T-cell (primary cell): ENCODE measurements at regions of chr9 and their contacts with region 1.

Region 1: GRCh38 chr9:109861918-109862317 is 81.9 kb downstream of the PALM2AKAP2 start:
- DNase-seq: no peak
- ATAC-seq: no peak
- H3K4me3 ChIP-seq: no peak overlapping the region
- H3K4me3 Mint-ChIP-seq: no peak overlapping the region
- H3K27ac ChIP-seq: no peak overlapping the region
- H3K27ac Mint-ChIP-seq: no peak overlapping the region
- H3K4me1 ChIP-seq: no peaks in the 10 kb centered on the region
- H3K4me1 Mint-ChIP-seq: no peaks in the 10 kb centered on the region
- H3K27me3 ChIP-seq: peaks cover 3 to 4% of the 10 kb centered on the region in 2 experiments
- H3K27me3 Mint-ChIP-seq: peaks cover 7 to 10% of the 10 kb centered on the region in 2 donors

Region 2: DNA sequence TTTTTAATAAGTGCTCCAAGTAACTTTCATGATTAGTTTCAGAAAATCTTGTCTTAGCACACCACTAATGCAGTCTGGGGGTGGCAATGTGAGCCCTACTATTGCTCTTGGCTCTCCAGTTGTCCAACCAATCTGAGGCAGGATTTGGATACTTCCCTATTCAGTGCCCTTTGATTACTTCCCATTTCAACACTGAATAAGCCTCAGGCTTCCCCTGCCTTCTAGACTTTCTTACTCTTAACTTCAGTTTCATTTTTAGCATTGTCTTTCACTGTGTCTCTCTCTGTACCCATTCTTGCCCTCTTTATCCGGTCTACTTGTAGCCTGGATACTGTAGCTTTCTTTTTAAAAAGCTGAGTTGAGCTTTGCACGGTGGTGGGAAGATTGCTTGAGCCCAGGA is 160.0 kb after region 1 on chr9:
- CTCF ChIA-PET with region 1: interaction called in 1 of 2 experiments, 13 read pairs
- POLR2A ChIA-PET with region 1: no interaction called
- DNase-seq: peak in 1 of 35 experiments; percentile 3
- ATAC-seq: peak; percentile 31 to 62 (median 48)
- H3K4me3 ChIP-seq: no peak overlapping the region
- H3K4me3 Mint-ChIP-seq: no peak overlapping the region
- H3K27ac ChIP-seq: no peak overlapping the region
- H3K27ac Mint-ChIP-seq: peak overlapping the region; percentile 52 to 83
- H3K4me1 ChIP-seq: peaks cover 0 to 7% of the 10 kb centered on the region in 2 experiments
- H3K4me1 Mint-ChIP-seq: peaks cover 7 to 10% (median 7%) of the 10 kb centered on the region in 3 donors
- H3K27me3 ChIP-seq: no peaks in the 10 kb centered on the region
- H3K27me3 Mint-ChIP-seq: no peaks in the 10 kb centered on the region